AG04450 (cell line): ENCODE measurements at regions of chr16 and their contacts with region 1.

Region 1: GRCh38 chr16:25224731-25225319 is 8.1 kb downstream of the AQP8 start:
- DNase-seq: no peak
- H3K4me3 ChIP-seq: no peak overlapping the region
- H3K27ac ChIP-seq: no peak overlapping the region
- H3K27me3 ChIP-seq: peaks cover 10% of the 10 kb centered on the region
- CTCF ChIP-seq: no peak

Region 2: DNA sequence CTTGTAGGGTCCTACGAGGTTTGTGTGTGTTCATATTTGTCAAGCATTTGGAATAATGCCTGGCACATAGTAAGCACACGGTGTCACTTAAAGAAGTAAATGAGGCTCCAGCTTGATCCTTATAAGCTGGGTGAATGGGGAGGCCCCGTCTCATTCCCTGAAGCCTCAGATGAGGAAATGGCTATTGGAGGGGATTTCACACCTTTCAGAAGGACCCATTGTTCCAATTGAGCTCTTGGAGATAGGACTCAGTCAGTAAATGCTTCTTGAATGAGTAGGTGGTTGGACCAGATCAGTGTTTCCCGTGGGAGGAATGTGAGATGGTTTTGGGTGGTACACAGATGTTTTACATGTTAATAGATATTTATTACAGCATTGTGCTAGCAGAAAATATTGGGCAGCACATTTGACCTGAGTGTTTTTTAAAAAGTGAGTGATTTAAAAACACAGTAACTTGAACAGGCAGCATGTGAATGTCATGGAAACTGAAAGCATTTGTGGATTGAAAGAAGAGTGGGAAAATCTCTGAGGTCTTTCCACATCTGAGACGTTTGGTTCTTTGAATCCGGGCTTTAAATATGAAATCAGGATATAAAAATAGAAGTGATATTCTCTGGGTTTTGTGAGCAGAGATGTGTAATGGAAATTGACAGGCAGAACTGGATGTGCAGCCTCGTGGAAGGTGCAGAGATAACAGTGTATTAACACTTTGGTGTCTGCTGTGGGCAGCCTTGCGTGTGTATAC is 173.2 kb before region 1 on chr16:
- CTCF ChIA-PET with region 1: interaction called, 32 read pairs
- POLR2A ChIA-PET with region 1: no interaction called
- DNase-seq: no peak
- H3K4me3 ChIP-seq: no peak overlapping the region
- H3K27ac ChIP-seq: peak overlapping the region; percentile 22
- H3K27me3 ChIP-seq: no peaks in the 10 kb centered on the region
- CTCF ChIP-seq: no peak

Region 3: GRCh38 chr16:25111403-25112166 is 113.2 kb before region 1 on chr16 and contains the start of gene LCMT1:
- CTCF ChIA-PET with region 1: interaction called, 21 read pairs
- POLR2A ChIA-PET with region 1: no interaction called
- DNase-seq: peak; percentile 91
- H3K4me3 ChIP-seq: peak within 1 kb of the TSS; percentile 98
- H3K27ac ChIP-seq: peak within 1 kb of the TSS; percentile 73
- H3K27me3 ChIP-seq: no peaks in the 10 kb centered on the region
- CTCF ChIP-seq: no peak; the same call in 1 of the 2 replicates
- polyA plus RNA-seq, gene LCMT1: 41.7 and 46.9 TPM in 2 replicates

Region 4: GRCh38 chr16:25163683-25164082 is 61.1 kb before region 1 on chr16:
- CTCF ChIA-PET with region 1: interaction called, 10 read pairs
- POLR2A ChIA-PET with region 1: no interaction called
- DNase-seq: no peak
- H3K4me3 ChIP-seq: no peak overlapping the region
- H3K27ac ChIP-seq: no peak overlapping the region
- H3K27me3 ChIP-seq: no peaks in the 10 kb centered on the region
- CTCF ChIP-seq: no peak

Region 5: DNA sequence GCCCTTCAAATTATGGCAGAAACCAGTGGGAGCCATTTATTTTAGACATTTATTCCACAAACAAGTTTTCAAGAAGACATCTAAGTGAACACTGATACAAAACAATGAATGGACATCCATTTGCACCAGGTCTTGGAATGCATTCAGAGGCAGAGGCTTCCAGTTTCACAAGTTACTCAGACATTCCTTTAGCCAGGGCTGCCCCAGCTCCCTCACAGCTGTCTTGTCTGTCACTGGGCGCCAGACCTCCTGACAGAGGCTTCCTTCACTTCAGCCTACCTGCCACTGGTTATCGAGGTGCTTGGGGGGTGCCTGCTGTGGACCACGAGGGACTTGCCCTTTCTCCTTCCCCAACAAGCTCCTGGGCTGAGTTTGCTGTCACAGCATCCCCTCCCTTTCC is 11.2 kb after region 1 on chr16:
- CTCF ChIA-PET with region 1: interaction called, 62 read pairs
- POLR2A ChIA-PET with region 1: no interaction called
- DNase-seq: no peak
- H3K4me3 ChIP-seq: no peak overlapping the region
- H3K27ac ChIP-seq: no peak overlapping the region
- H3K27me3 ChIP-seq: peaks cover 2% of the 10 kb centered on the region
- CTCF ChIP-seq: no peak

Region 6: GRCh38 chr16:25311049-25311448 is 86.2 kb after region 1 on chr16:
- CTCF ChIA-PET with region 1: no interaction called
- POLR2A ChIA-PET with region 1: no interaction called
- DNase-seq: no peak
- H3K4me3 ChIP-seq: no peak overlapping the region
- H3K27ac ChIP-seq: no peak overlapping the region
- H3K27me3 ChIP-seq: no peaks in the 10 kb centered on the region
- CTCF ChIP-seq: no peak